ENCODE measurements at regions of chr12 and their contacts with region 1.

Region 1: DNA sequence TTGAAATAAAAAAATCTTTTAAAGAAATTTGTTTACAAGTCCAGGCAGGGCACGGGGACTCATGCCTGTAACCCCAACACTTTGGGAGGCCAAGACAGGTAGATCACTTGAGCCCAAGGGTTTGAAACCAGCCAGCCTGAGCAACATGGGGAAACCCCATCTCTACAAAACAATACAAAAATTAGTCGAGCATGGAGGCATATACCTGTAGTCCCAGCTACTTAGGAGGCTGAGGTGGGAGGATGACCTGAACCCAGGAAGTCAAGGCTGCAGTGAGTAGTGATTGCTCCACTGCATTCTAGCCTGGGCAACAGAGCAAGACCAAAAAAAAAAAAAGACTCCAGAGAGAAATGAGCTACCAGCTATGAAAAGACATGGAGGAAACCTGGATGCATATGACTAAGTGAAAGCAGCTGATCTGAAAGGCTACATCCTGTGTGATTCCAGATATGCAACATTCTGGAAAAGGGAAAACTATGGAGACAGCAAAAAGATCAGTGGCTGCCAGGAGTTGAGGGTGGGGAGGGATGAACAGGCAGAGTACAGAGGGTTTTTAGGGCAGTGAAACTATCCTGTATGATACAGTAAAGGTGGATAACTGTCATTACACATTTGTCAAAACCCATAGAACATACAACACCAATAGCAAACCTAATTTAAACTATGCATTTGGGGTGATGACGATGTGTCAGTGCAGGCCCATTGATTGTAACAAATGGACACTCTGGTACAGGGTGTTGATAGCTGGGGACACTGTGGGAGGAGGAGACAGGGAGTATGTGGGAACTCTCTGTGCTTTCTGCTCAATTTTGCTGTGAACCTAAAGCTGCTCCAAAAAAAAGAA is 59.9 kb downstream of the PRKAB1 start:
- DNase-seq: no peak
- H3K4me3 ChIP-seq: no peak overlapping the region
- H3K27ac ChIP-seq: no peak overlapping the region
- H3K4me1 ChIP-seq: no peaks in the 10 kb centered on the region
- H3K27me3 ChIP-seq: no peaks in the 10 kb centered on the region
- CTCF ChIP-seq: no peak
- EP300 ChIP-seq: no peak
- POLR2A ChIP-seq: no peak

Region 2: GRCh38 chr12:119354179-119354953 is 373.5 kb before region 1 on chr12:
- in situ Hi-C with region 1: no loop called
- intact Hi-C with region 1: no loop called
- DNase-seq: no peak
- H3K4me3 ChIP-seq: no peak overlapping the region
- H3K27ac ChIP-seq: no peak overlapping the region
- H3K4me1 ChIP-seq: no peaks in the 10 kb centered on the region
- H3K27me3 ChIP-seq: no peaks in the 10 kb centered on the region
- CTCF ChIP-seq: no peak
- EP300 ChIP-seq: no peak
- POLR2A ChIP-seq: no peak

Region 3: DNA sequence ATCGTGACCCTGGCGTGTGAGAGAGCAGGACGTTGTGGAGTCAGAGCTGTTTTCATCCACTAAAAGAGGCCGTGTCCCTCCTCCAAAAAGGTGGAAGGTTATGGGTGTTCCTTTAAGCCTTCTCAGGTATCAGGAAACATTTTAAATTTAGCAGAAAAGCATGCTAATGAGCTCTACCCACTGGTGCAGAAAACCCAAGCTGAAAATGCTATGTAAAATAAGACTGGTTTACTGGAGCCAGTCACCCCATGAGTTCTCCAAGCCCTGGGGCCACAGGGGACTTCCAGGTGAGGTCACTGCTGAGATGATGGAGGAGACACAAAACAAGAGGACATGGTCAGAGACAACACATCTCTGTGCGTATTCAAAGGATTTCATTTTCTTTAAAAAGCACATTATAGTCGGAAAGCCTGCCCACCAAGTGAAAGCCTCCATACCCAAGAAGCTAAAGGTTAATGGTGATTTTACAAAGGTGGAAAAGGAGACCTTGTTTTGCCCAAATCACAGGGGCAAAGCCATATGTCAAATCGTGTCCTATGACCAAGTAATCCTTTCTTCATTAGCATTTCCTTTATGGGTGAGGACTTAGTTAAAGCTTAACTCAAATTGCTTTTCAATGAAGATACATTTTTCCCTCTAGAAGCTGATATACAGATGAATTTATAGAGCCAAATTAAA is 45.7 kb before region 1 on chr12:
- in situ Hi-C with region 1: no loop called
- intact Hi-C with region 1: no loop called
- DNase-seq: no peak
- H3K4me3 ChIP-seq: no peak overlapping the region
- H3K27ac ChIP-seq: peak overlapping the region; percentile 75 to 82 (median 78)
- H3K4me1 ChIP-seq: peaks cover 15 to 87% (median 61%) of the 10 kb centered on the region in 4 donors
- H3K27me3 ChIP-seq: no peaks in the 10 kb centered on the region
- CTCF ChIP-seq: no peak
- EP300 ChIP-seq: no peak
- POLR2A ChIP-seq: no peak

Region 4: GRCh38 chr12:119780786-119781434 is 53.1 kb after region 1 on chr12:
- in situ Hi-C with region 1: no loop called
- intact Hi-C with region 1: loop called (anchors 1 kb)
- DNase-seq: peak; percentile 68
- H3K4me3 ChIP-seq: peak overlapping the region in 1 of 4 donors; percentile 24
- H3K27ac ChIP-seq: peak overlapping the region in 1 of 4 donors; percentile 19
- H3K4me1 ChIP-seq: peaks cover 0 to 9% (median 0%) of the 10 kb centered on the region in 4 donors
- H3K27me3 ChIP-seq: no peaks in the 10 kb centered on the region
- CTCF ChIP-seq: peak; percentile 67 to 82 (median 76)
- EP300 ChIP-seq: no peak
- POLR2A ChIP-seq: no peak